Testis (tissue), 5 donors: ENCODE measurements at regions of chr4 and their contacts with region 1.

Region 1: GRCh38 chr4:38319456-38320342 is 344.3 kb upstream of the KLF3 start:
- DNase-seq: peak; percentile 95
- H3K4me3 ChIP-seq: peak overlapping the region; percentile 16 to 32
- H3K27ac ChIP-seq: peak overlapping the region; percentile 31 to 62
- H3K4me1 ChIP-seq: peaks cover 13% of the 10 kb centered on the region
- H3K27me3 ChIP-seq: no peaks in the 10 kb centered on the region
- CTCF ChIP-seq: peak; percentile 83 to 98 (median 96)
- POLR2A ChIP-seq: no peak

Region 2: GRCh38 chr4:38255572-38255971 is 64.1 kb before region 1 on chr4:
- intact Hi-C with region 1: no loop called
- DNase-seq: no peak
- H3K4me3 ChIP-seq: no peak overlapping the region
- H3K27ac ChIP-seq: no peak overlapping the region
- H3K4me1 ChIP-seq: no peaks in the 10 kb centered on the region
- H3K27me3 ChIP-seq: no peaks in the 10 kb centered on the region
- CTCF ChIP-seq: no peak
- POLR2A ChIP-seq: no peak

Region 3: GRCh38 chr4:38673130-38673978 is 353.7 kb after region 1 on chr4:
- intact Hi-C with region 1: loop called (anchors 5 kb)
- DNase-seq: peak; percentile 32
- H3K4me3 ChIP-seq: no peak overlapping the region
- H3K27ac ChIP-seq: peak overlapping the region; percentile 44 to 99
- H3K4me1 ChIP-seq: peaks cover 68% of the 10 kb centered on the region
- H3K27me3 ChIP-seq: no peaks in the 10 kb centered on the region
- CTCF ChIP-seq: no peak
- POLR2A ChIP-seq: no peak

Region 4: DNA sequence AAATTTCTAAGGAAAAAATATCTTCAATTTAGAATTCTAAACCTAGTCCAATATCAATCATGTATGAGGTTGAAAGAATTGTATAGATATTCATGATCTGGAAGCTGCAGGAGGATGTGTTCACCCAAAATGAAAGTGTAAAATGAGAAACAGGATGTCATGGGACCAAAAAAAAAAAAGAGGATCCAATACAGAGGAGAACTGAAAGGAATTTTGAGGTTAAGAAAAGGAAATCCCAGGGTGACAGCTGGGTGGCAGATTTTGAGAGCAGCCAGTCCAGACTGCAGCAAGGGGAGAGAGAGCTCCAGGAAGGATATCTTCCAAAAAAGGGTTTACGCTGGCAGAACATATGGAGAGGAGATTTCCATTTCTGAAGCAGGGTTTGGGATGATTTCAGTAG is 424.2 kb after region 1 on chr4:
- intact Hi-C with region 1: no loop called
- DNase-seq: no peak
- H3K4me3 ChIP-seq: no peak overlapping the region
- H3K27ac ChIP-seq: no peak overlapping the region
- H3K4me1 ChIP-seq: no peaks in the 10 kb centered on the region
- H3K27me3 ChIP-seq: no peaks in the 10 kb centered on the region
- CTCF ChIP-seq: no peak
- POLR2A ChIP-seq: no peak